HCT116 (cell line): ENCODE measurements at regions of chr10 and their contacts with region 1.

Region 1: GRCh38 chr10:17847585-17848296 is 38.6 kb downstream of the MRC1 start:
- DNase-seq: no peak
- ATAC-seq: peak; percentile 65
- H3K4me3 ChIP-seq: no peak overlapping the region
- H3K27ac ChIP-seq: no peak overlapping the region
- H3K4me1 ChIP-seq: no peaks in the 10 kb centered on the region
- H3K27me3 ChIP-seq: no peaks in the 10 kb centered on the region
- CTCF ChIP-seq: peak; percentile 29 to 57 (median 56); a peak in 4 of 6 replicates
- POLR2A ChIP-seq: no peak
- RAD21 ChIP-seq: peak; percentile 59

Region 2: GRCh38 chr10:15879058-15879457 is 1968.7 kb before region 1 on chr10:
- CTCF ChIA-PET with region 1: no interaction called
- POLR2A ChIA-PET with region 1: no interaction called
- RAD21 ChIA-PET with region 1: no interaction called
- intact Hi-C with region 1: loop called (anchors 10 kb)
- DNase-seq: no peak
- ATAC-seq: peak; percentile 53
- H3K4me3 ChIP-seq: no peak overlapping the region
- H3K27ac ChIP-seq: no peak overlapping the region
- H3K4me1 ChIP-seq: no peaks in the 10 kb centered on the region
- H3K27me3 ChIP-seq: peaks cover 33% of the 10 kb centered on the region
- CTCF ChIP-seq: peak; percentile 48 to 82 (median 59); a peak in 5 of 6 replicates
- POLR2A ChIP-seq: no peak
- RAD21 ChIP-seq: peak; percentile 69

Region 3: DNA sequence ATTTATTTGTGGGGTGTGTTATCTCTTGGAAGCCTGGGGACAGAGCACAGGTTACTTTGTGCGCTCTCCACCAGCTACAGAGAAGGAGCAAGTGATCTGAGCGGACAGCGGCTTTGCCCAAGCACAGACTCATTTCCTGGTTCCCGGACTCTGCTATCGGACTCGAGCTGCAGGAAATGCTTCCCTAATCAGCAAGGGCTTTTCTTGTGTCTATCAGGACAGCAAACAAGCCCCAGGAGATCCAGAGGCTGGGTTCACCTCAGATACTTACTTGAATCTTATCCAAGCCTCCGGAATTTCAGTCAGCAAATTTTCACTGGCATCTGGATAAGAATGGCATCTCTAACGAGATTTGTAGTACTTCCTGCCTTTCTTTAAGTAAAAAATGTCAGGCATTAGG is 10.8 kb before region 1 on chr10:
- CTCF ChIA-PET with region 1: interaction called, 15 read pairs
- POLR2A ChIA-PET with region 1: no interaction called
- RAD21 ChIA-PET with region 1: no interaction called
- intact Hi-C with region 1: no loop called
- DNase-seq: no peak
- ATAC-seq: no peak
- H3K4me3 ChIP-seq: no peak overlapping the region
- H3K27ac ChIP-seq: no peak overlapping the region
- H3K4me1 ChIP-seq: peaks cover 9 to 25% of the 10 kb centered on the region in 2 experiments
- H3K27me3 ChIP-seq: no peaks in the 10 kb centered on the region
- CTCF ChIP-seq: no peak
- POLR2A ChIP-seq: no peak
- RAD21 ChIP-seq: no peak

Region 4: GRCh38 chr10:17923728-17924127 is 76.0 kb after region 1 on chr10:
- CTCF ChIA-PET with region 1: no interaction called
- POLR2A ChIA-PET with region 1: no interaction called
- RAD21 ChIA-PET with region 1: no interaction called
- intact Hi-C with region 1: no loop called
- DNase-seq: no peak
- ATAC-seq: no peak
- H3K4me3 ChIP-seq: no peak overlapping the region
- H3K27ac ChIP-seq: no peak overlapping the region
- H3K4me1 ChIP-seq: no peaks in the 10 kb centered on the region
- H3K27me3 ChIP-seq: no peaks in the 10 kb centered on the region
- CTCF ChIP-seq: no peak
- POLR2A ChIP-seq: no peak
- RAD21 ChIP-seq: no peak

Region 5: GRCh38 chr10:18214691-18215563 is 367.2 kb after region 1 on chr10:
- CTCF ChIA-PET with region 1: interaction called, 49 read pairs
- POLR2A ChIA-PET with region 1: no interaction called
- RAD21 ChIA-PET with region 1: interaction called, 3 to 4 read pairs
- intact Hi-C with region 1: loop called (anchors 1 kb)
- DNase-seq: no peak
- ATAC-seq: peak; percentile 87
- H3K4me3 ChIP-seq: no peak overlapping the region
- H3K27ac ChIP-seq: no peak overlapping the region
- H3K4me1 ChIP-seq: no peaks in the 10 kb centered on the region
- H3K27me3 ChIP-seq: no peaks in the 10 kb centered on the region
- CTCF ChIP-seq: peak; percentile 59 to 86 (median 82); a peak in 5 of 6 replicates
- POLR2A ChIP-seq: no peak
- RAD21 ChIP-seq: peak; percentile 77

Region 6: GRCh38 chr10:18312374-18313139 is 464.8 kb after region 1 on chr10:
- CTCF ChIA-PET with region 1: no interaction called
- POLR2A ChIA-PET with region 1: no interaction called
- RAD21 ChIA-PET with region 1: no interaction called
- intact Hi-C with region 1: loop called (anchors 2 kb)
- DNase-seq: peak; percentile 15
- ATAC-seq: peak; percentile 85
- H3K4me3 ChIP-seq: no peak overlapping the region
- H3K27ac ChIP-seq: no peak overlapping the region
- H3K4me1 ChIP-seq: peaks cover 0 to 6% of the 10 kb centered on the region in 2 experiments; a peak in 1 of 4 replicates
- H3K27me3 ChIP-seq: no peaks in the 10 kb centered on the region
- CTCF ChIP-seq: peak; percentile 24 to 62 (median 56); a peak in 5 of 6 replicates
- POLR2A ChIP-seq: no peak
- RAD21 ChIP-seq: peak; percentile 60